Right ventricle myocardium superior (tissue), 1 donor: ENCODE measurements at regions of chr5 and their contacts with region 1.

Region 1: GRCh38 chr5:16791036-16791705 is 144.9 kb downstream of the MYO10 start:
- DNase-seq: no peak
- ATAC-seq: peak; percentile 69

Region 2: GRCh38 chr5:16916262-16916865 is 125.2 kb after region 1 on chr5:
- intact Hi-C with region 1: no loop called
- DNase-seq: no peak
- ATAC-seq: no peak

Region 3: DNA sequence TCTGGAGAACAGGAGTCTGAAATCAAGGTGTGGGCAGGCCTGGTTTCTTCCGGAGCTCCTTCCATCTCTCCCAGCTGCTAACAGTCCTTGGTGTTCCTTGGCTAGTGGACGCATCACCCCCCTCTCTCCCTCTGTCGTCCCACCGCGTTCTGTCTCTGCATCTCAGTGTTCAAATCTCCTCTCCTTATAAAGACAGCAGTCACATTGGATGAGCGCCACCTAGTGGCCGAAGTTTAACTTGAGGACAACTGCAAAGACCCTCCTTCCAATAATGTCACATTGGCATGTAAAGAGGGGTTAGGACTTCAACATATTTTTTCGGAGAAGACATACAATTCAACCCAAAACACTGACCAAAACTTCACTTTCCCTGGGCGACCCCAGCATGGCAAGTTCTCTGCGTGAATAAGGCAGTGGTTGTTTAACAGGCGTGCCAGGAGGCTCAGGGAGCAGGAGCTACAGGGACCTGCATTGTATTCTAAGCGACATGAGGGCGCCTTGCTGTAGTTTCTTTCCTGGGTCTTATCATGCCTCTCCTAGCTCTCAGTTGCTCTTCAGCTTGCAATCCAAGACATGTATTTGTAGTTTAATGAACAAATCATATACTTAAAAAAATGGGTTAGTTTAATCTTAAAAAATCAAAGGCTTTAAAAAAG is 398.3 kb after region 1 on chr5:
- intact Hi-C with region 1: loop called (anchors 2 kb)
- DNase-seq: peak; percentile 79
- ATAC-seq: peak; percentile 83

Region 4: GRCh38 chr5:17808566-17808965 is 1017.4 kb after region 1 on chr5:
- intact Hi-C with region 1: no loop called
- DNase-seq: no peak
- ATAC-seq: no peak